Caco-2 (cell line): ENCODE measurements at regions of chr10 and their contacts with region 1.

Region 1: GRCh38 chr10:99620713-99621453 is 644 bp upstream of the SLC25A28 start:
- DNase-seq: peak; percentile 91 to 97
- H3K4me3 ChIP-seq: peak overlapping the region; percentile 71
- H3K4me3 Mint-ChIP-seq: peak overlapping the region; percentile 68
- H3K27ac Mint-ChIP-seq: peak overlapping the region; percentile 98
- H3K4me1 ChIP-seq: peaks cover 8% of the 10 kb centered on the region
- H3K4me1 Mint-ChIP-seq: peaks cover 41% of the 10 kb centered on the region
- H3K27me3 ChIP-seq: no peaks in the 10 kb centered on the region
- H3K27me3 Mint-ChIP-seq: no peaks in the 10 kb centered on the region
- CTCF ChIP-seq: peak in 1 of 2 experiments; percentile 14

Region 2: GRCh38 chr10:99430451-99431189 is 190.3 kb before region 1 on chr10 and contains the start of gene GOT1:
- CTCF ChIA-PET with region 1: interaction called, 6 read pairs
- POLR2A ChIA-PET with region 1: interaction called, 14 read pairs
- intact Hi-C with region 1: loop called (anchors 2 kb)
- DNase-seq: peak; percentile 98
- H3K4me3 ChIP-seq: peak within 1 kb of the TSS; percentile 97
- H3K4me3 Mint-ChIP-seq: peak within 1 kb of the TSS; percentile 99
- H3K27ac Mint-ChIP-seq: peak within 1 kb of the TSS; percentile 97
- H3K4me1 ChIP-seq: no peaks in the 10 kb centered on the region; the same call in 1 of the 2 replicates
- H3K4me1 Mint-ChIP-seq: peaks cover 12% of the 10 kb centered on the region
- H3K27me3 ChIP-seq: no peaks in the 10 kb centered on the region
- H3K27me3 Mint-ChIP-seq: no peaks in the 10 kb centered on the region
- CTCF ChIP-seq: no peak
- total RNA-seq, gene GOT1: 58.5 and 59.8 TPM in 2 replicates

Region 3: GRCh38 chr10:99647601-99648151 is 26.8 kb after region 1 on chr10:
- CTCF ChIA-PET with region 1: no interaction called
- POLR2A ChIA-PET with region 1: interaction called, 9 read pairs
- intact Hi-C with region 1: loop called (anchors 1 kb)
- DNase-seq: peak; percentile 59 to 69
- H3K4me3 ChIP-seq: no peak overlapping the region
- H3K4me3 Mint-ChIP-seq: peak overlapping the region; percentile 61
- H3K27ac Mint-ChIP-seq: peak overlapping the region; percentile 72
- H3K4me1 ChIP-seq: peaks cover 59% of the 10 kb centered on the region
- H3K4me1 Mint-ChIP-seq: peaks cover 43% of the 10 kb centered on the region
- H3K27me3 ChIP-seq: no peaks in the 10 kb centered on the region
- H3K27me3 Mint-ChIP-seq: no peaks in the 10 kb centered on the region
- CTCF ChIP-seq: no peak

Region 4: GRCh38 chr10:99659031-99659867 is 38.4 kb after region 1 on chr10 and contains the start of gene ENTPD7:
- CTCF ChIA-PET with region 1: interaction called, 7 read pairs
- POLR2A ChIA-PET with region 1: interaction called, 27 read pairs
- intact Hi-C with region 1: loop called (anchors 2 kb)
- DNase-seq: peak; percentile 97 to 98
- H3K4me3 ChIP-seq: peak within 1 kb of the TSS; percentile 94
- H3K4me3 Mint-ChIP-seq: peak within 1 kb of the TSS; percentile 79
- H3K27ac Mint-ChIP-seq: peak within 1 kb of the TSS; percentile 69
- H3K4me1 ChIP-seq: peaks cover 19% of the 10 kb centered on the region
- H3K4me1 Mint-ChIP-seq: peaks cover 24% of the 10 kb centered on the region
- H3K27me3 ChIP-seq: no peaks in the 10 kb centered on the region
- H3K27me3 Mint-ChIP-seq: no peaks in the 10 kb centered on the region
- CTCF ChIP-seq: peak; percentile 21 to 38
- total RNA-seq, gene ENTPD7: 35.5 and 36.0 TPM in 2 replicates

Region 5: DNA sequence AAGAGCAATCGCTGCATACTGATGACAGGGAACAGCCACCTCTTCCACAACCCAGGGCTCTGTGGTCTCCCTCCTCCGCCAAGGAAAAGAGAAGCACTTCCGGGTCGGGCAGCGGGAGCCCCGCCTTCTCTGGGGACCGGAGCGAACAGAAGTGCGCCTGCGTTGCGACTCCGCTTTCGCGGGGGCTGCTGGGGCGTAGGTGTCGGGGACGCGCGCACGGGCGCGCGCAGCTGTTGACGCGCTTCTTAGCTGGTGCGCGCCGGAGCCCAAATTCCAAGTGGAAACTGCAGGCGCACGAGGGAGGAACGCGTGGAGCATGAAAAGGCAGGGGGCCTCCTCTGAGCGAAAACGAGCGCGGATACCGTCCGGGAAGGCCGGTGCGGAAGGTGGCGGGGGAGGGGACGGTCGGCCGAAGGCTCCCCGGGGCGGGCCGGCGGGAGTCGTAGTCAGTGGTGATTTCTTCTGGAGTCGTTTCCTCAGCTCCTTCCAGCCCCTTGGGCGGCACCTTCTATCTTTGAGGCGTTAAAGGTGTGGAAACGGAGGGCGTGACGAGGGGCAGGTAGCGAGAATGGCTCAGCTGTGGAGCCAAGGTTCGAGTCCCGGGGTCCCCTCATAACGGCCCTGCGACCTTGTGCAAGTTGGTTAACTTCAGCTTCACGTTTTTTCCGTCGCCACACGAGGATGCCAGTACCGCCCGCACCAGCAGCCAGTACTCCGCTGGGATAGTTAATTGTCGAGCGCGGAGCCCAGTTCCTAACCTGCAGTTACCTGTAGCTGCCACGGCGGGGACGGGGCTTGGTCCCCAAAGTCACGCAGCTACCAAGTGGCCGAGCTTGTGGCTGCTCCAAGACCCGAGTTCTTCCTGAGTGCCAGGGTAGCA is 111.4 kb after region 1 on chr10 and contains the starts of genes COX15 and CUTC:
- CTCF ChIA-PET with region 1: interaction called, 9 read pairs
- POLR2A ChIA-PET with region 1: interaction called, 12 read pairs
- intact Hi-C with region 1: loop called (anchors 1 kb)
- DNase-seq: peak; percentile 97 to 98
- H3K4me3 ChIP-seq: peak within 1 kb of the TSS; percentile 98
- H3K4me3 Mint-ChIP-seq: peak within 1 kb of the TSS; percentile 96
- H3K27ac Mint-ChIP-seq: peak within 1 kb of the TSS; percentile 97
- H3K4me1 ChIP-seq: no peaks in the 10 kb centered on the region; the same call in 1 of the 2 replicates
- H3K4me1 Mint-ChIP-seq: peaks cover 13% of the 10 kb centered on the region
- H3K27me3 ChIP-seq: no peaks in the 10 kb centered on the region
- H3K27me3 Mint-ChIP-seq: no peaks in the 10 kb centered on the region
- CTCF ChIP-seq: peak; percentile 61 to 69
- total RNA-seq, gene COX15: 47.6 and 50.2 TPM in 2 replicates
- total RNA-seq, gene CUTC: 27.6 and 30.1 TPM in 2 replicates

Region 6: GRCh38 chr10:99779335-99779734 is 158.5 kb after region 1 on chr10:
- CTCF ChIA-PET with region 1: no interaction called
- POLR2A ChIA-PET with region 1: no interaction called
- intact Hi-C with region 1: loop called (anchors 2 kb)
- DNase-seq: peak in 1 of 2 experiments; percentile 42
- H3K4me3 ChIP-seq: peak overlapping the region; percentile 21
- H3K4me3 Mint-ChIP-seq: peak overlapping the region; percentile 77
- H3K27ac Mint-ChIP-seq: peak overlapping the region; percentile 95
- H3K4me1 ChIP-seq: peaks cover 61% of the 10 kb centered on the region
- H3K4me1 Mint-ChIP-seq: peaks cover 74% of the 10 kb centered on the region
- H3K27me3 ChIP-seq: no peaks in the 10 kb centered on the region
- H3K27me3 Mint-ChIP-seq: no peaks in the 10 kb centered on the region
- CTCF ChIP-seq: no peak